Activated CD8-positive, alpha-beta memory T cell treated with anti-CD3 and anti-CD28 coated beads, Interleukin-2, amount 10 ng/mL, durations not matched to agents 7 days and 5 days (primary cell): ENCODE measurements at regions of chr10 and their contacts with region 1.

Region 1: DNA sequence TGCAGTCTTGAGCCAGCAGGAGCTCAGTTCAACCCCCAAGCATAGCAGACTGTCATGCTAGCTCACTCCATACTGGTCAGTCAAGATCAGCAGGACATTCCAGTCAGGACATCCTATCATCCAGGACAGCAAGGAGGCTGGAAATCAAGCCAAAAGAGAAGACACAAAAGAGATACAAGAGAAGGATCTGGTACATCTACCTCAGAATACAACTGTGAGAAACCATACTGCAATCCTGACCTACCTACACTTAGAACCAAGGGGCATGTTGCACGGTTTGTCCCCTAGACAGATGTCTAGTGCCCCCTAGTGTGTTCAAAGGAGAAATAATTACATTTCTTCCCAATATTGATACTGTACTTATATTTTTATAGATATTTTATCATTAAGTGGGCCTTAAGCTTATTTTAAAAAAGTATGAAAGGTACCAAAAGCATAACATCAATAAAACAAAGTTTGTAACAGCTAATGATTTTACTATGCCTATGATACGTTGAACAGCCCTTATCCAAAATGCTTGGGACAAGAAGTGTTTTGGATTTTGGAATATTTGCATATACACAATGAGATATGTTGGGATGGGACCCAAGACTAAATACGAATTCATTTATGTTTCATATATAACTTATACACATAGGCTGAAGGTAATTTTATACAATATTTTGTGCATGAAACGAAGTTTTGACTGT is 26.7 kb downstream of the ERCC6 start:
- DNase-seq: peak; percentile 46
- ATAC-seq: peak; percentile 68
- H3K4me3 Mint-ChIP-seq: no peak overlapping the region
- H3K27ac Mint-ChIP-seq: no peak overlapping the region
- H3K4me1 Mint-ChIP-seq: peaks cover 21% of the 10 kb centered on the region
- H3K27me3 Mint-ChIP-seq: no peaks in the 10 kb centered on the region

Region 2: GRCh38 chr10:49407552-49408137 is 104.6 kb before region 1 on chr10:
- CTCF ChIA-PET with region 1: interaction called, 131 read pairs
- DNase-seq: peak; percentile 82
- ATAC-seq: peak; percentile 77
- H3K4me3 Mint-ChIP-seq: no peak overlapping the region
- H3K27ac Mint-ChIP-seq: no peak overlapping the region
- H3K4me1 Mint-ChIP-seq: no peaks in the 10 kb centered on the region
- H3K27me3 Mint-ChIP-seq: peaks cover 32% of the 10 kb centered on the region

Region 3: GRCh38 chr10:49465736-49466135 is 46.5 kb before region 1 on chr10:
- CTCF ChIA-PET with region 1: no interaction called
- DNase-seq: no peak
- ATAC-seq: no peak
- H3K4me3 Mint-ChIP-seq: no peak overlapping the region
- H3K27ac Mint-ChIP-seq: no peak overlapping the region
- H3K4me1 Mint-ChIP-seq: no peaks in the 10 kb centered on the region
- H3K27me3 Mint-ChIP-seq: no peaks in the 10 kb centered on the region

Region 4: GRCh38 chr10:49500418-49500817 is 11.8 kb before region 1 on chr10:
- CTCF ChIA-PET with region 1: interaction called, 21 read pairs
- DNase-seq: no peak
- ATAC-seq: no peak
- H3K4me3 Mint-ChIP-seq: no peak overlapping the region
- H3K27ac Mint-ChIP-seq: no peak overlapping the region
- H3K4me1 Mint-ChIP-seq: peaks cover 3% of the 10 kb centered on the region
- H3K27me3 Mint-ChIP-seq: no peaks in the 10 kb centered on the region